PC-3 (cell line): ENCODE measurements at regions of chr19 and their contacts with region 1.

Region 1: DNA sequence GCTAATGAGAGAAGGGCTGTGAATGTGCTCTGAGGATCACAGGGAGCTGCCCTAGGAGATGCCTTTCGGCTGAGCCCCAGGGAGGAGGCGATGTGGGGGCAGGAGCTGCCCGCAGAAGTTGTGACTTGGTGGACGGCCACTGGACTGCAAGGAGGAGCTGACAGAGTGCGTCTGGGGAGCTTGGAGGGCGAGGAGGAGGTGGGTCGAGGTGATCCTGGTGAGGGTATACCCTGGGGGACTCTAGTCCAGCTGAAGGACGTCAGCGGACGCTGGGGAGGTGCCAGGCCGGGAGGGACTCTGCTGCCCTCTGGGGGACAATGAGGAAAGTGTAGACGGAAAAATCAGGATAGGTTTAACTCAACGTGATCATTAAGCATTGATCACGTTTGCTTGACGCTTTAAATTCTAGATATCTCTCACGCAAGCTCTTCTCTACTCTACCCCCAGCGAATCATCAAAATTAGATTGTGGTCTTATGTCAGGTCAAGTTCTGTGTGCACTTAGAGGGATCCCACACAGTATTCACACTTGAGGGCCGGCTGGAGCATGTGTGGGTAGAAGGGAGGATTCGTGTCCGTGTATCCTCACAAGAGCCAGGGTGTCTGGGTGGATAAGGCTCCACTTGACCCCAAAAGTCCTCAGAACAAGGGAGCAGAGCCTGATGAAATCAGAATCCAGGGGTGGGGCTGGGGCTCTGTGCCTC is 3.3 kb upstream of the CEACAM7 start:
- DNase-seq: peak; percentile 27
- ATAC-seq: no peak
- H3K4me3 ChIP-seq: no peak overlapping the region
- H3K27ac ChIP-seq: no peak overlapping the region
- H3K4me1 ChIP-seq: no peaks in the 10 kb centered on the region
- H3K27me3 ChIP-seq: no peaks in the 10 kb centered on the region
- CTCF ChIP-seq: peak; percentile 71

Region 2: DNA sequence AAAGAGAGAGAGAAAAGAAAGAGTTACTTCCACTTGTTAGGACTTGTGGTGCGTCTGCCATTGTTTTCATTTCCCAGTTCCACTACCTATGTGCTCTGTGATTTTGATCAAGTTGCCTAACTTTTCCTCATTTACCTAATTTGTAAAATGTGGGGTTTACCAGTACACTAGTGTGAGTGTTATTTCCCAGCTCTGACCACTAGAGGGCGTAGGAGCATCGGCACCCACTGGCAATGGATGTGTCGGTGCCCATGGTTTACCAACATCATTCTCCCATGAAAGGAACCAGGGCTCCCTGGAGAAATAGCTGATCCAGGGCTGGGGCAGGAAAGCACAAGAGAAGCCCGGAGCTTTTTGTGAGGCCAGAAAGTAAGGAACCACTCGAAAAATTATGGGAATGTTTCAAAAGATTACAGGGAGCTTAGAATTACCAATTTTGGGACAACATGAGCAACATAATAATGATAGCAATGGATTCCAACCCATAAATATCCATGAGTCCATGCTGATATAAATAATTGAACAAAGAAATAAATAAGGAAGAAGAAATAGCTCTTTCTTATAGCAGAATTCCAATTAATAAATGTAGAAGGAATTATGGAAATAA is 49.4 kb before region 1 on chr19:
- CTCF ChIA-PET with region 1: interaction called, 6 read pairs
- POLR2A ChIA-PET with region 1: no interaction called
- intact Hi-C with region 1: loop called (anchors 5 kb)
- DNase-seq: peak; percentile 71
- ATAC-seq: peak; percentile 85
- H3K4me3 ChIP-seq: no peak overlapping the region
- H3K27ac ChIP-seq: no peak overlapping the region
- H3K4me1 ChIP-seq: no peaks in the 10 kb centered on the region
- H3K27me3 ChIP-seq: peaks cover 12% of the 10 kb centered on the region; the same call in 1 of the 2 replicates
- CTCF ChIP-seq: peak; percentile 86